Ovary (tissue), 10 donors: ENCODE measurements at regions of chr12 and their contacts with region 1.

Region 1: DNA sequence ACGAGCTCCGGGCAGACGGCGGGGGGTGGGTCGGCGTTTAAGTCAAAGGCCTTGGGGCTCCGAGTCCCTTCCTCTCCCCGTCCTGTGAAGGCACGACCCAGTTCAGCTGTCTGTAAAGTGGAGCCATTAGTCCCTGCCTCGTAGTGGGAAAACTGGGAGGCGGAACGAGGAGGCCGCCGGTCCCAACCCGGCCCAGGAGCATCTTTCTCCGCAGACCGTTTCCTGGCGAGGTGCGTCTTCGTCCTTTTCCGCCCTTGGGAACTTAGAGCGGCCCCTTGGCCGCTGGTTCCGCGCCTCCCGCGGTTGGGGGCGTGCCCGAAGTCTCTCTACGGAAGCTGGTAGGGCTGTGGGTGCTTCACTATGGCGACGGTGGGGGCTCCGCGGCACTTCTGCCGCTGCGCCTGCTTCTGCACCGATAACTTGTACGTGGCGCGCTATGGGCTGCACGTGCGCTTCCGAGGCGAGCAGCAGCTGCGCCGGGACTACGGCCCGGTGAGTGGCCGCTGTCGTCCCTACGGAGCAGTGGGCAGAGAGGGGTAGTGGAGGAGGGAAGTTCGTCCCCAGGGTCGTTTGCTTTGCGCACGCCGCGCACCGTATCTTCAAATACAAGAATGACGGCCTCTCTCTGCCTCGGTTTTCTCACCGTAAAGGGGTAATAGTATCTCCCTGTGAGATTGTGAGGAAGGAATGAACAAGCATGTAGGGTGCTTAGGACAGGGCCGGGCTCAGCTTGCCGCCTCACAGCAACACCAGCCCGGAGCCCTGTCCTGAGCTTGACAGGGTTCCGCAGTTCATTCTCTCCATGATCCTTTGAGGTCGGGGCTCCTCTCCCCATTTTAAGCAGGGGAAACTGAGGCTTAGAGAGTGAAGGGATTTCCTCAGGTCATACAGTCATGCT is at the start of gene OGFOD2:
- DNase-seq: peak; percentile 88 to 94 (median 91)
- H3K4me3 ChIP-seq: peak within 1 kb of the TSS; percentile 81
- H3K27ac ChIP-seq: peak within 1 kb of the TSS; percentile 95 to 97
- H3K4me1 ChIP-seq: peaks cover 10% of the 10 kb centered on the region
- H3K27me3 ChIP-seq: no peaks in the 10 kb centered on the region
- CTCF ChIP-seq: peak in 2 of 3 donors; percentile 34 to 36
- EP300 ChIP-seq: no peak
- POLR2A ChIP-seq: no peak
- total RNA-seq, gene OGFOD2: 10.6 to 17.6 (median 16.8) TPM

Region 2: GRCh38 chr12:122486805-122487426 is 488.2 kb before region 1 on chr12:
- intact Hi-C with region 1: no loop called
- DNase-seq: no peak
- H3K4me3 ChIP-seq: no peak overlapping the region
- H3K27ac ChIP-seq: no peak overlapping the region
- H3K4me1 ChIP-seq: no peaks in the 10 kb centered on the region
- H3K27me3 ChIP-seq: no peaks in the 10 kb centered on the region
- CTCF ChIP-seq: no peak
- EP300 ChIP-seq: no peak
- POLR2A ChIP-seq: no peak

Region 3: DNA sequence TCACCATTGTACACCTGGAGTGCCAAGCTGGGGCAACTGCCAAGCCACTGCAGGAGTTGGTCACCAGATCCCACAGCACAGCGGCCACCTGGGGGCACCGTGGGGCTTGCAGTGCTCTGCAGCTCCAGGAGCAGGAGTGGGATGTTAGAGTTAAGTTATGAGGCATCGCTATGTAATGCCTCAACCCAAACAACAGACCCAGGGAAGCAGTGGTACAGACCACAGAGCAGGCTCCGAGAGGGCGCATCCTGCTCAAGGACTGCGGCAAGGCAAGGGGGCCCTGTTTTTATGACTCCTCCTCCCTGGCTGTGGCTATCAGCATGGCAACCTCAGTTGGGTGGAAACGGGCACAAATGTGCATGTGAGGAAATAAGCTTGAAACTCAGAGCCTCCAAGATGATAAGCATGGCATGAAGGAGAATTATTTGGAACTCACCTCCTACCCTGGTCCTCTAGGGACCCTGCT is 68.4 kb after region 1 on chr12:
- intact Hi-C with region 1: loop called in 1 of 4 experiments (anchors 5 kb)
- DNase-seq: peak; percentile 85 to 91 (median 89)
- H3K4me3 ChIP-seq: no peak overlapping the region
- H3K27ac ChIP-seq: peak overlapping the region; percentile 72 to 77
- H3K4me1 ChIP-seq: peaks cover 42% of the 10 kb centered on the region
- H3K27me3 ChIP-seq: no peaks in the 10 kb centered on the region
- CTCF ChIP-seq: peak; percentile 41 to 88 (median 78)
- EP300 ChIP-seq: no peak
- POLR2A ChIP-seq: peak; percentile 38